GM12878 (cell line): ENCODE measurements at regions of chr15 and their contacts with region 1.

Region 1: DNA sequence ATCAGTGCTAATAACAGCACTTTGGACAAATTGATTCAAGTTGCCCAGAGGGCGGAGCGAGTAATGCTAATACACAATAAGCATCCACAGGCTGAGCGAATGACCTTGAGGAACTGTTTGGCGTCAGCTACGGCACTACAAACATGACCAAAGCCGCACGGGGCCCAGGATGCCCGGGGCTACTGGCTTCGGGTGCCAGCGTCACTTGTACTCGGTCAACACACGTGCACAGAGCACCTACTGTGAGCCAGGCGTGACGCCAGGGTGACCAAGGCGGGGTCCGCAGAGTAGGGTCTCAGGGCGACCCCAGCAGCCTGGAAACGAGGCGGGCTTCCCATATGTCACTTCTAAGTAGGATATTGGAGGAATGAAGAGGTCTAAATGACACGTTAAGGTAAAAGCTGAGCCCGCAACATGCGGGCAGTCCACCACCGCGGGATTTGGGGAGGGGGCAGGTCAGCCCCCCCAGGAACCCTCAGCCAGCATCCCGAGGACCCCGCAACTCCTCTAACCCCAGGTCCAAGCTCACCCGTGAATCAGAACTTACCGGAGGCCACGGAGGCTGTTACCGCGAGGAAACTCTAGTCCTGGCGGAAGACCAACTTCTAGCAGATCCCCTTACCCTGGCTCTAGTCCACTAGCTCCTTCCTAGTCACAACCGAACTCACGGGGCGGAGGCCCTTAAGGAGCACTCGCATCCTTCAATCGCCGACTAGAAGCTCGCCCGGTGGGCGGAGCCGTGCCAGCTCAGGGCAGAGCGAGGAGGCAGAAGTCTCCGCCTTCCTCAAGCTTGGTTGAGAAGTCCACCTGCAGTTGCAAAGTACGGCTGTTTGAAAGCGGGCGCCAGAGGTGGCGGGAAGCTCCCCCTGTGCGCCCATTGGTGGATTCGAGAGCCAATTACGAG is at the start of gene CEP152:
- DNase-seq: peak; percentile 98
- ATAC-seq: peak; percentile 94
- H3K4me3 ChIP-seq: peak within 1 kb of the TSS; percentile 79
- H3K27ac ChIP-seq: peak within 1 kb of the TSS; percentile 73
- H3K4me1 ChIP-seq: 0 out of 2 replicates have a peak, but pooled peaks cover 2% of the 10 kb centered on the region
- H3K27me3 ChIP-seq: no peaks in the 10 kb centered on the region; a peak in 1 of 4 replicates
- CTCF ChIP-seq: no peak
- EP300 ChIP-seq: no peak
- POLR2A ChIP-seq: peak; percentile 87
- RAD21 ChIP-seq: no peak
- polyA plus RNA-seq, gene CEP152: 5.3 to 5.7 TPM

Region 2: GRCh38 chr15:48149858-48150257 is 660.8 kb before region 1 on chr15:
- CTCF ChIA-PET with region 1: no interaction called
- POLR2A ChIA-PET with region 1: no interaction called
- RAD21 ChIA-PET with region 1: no interaction called
- SMC1A ChIA-PET with region 1: no interaction called
- in situ Hi-C with region 1: loop called (anchors 25 kb)
- intact Hi-C with region 1: no loop called
- DNase-seq: no peak
- ATAC-seq: no peak
- H3K4me3 ChIP-seq: no peak overlapping the region
- H3K27ac ChIP-seq: no peak overlapping the region
- H3K4me1 ChIP-seq: no peaks in the 10 kb centered on the region
- H3K27me3 ChIP-seq: no peaks in the 10 kb centered on the region
- CTCF ChIP-seq: no peak
- EP300 ChIP-seq: no peak
- POLR2A ChIP-seq: no peak
- RAD21 ChIP-seq: no peak

Region 3: GRCh38 chr15:48682949-48683651 is 127.6 kb before region 1 on chr15:
- CTCF ChIA-PET with region 1: no interaction called
- POLR2A ChIA-PET with region 1: no interaction called
- RAD21 ChIA-PET with region 1: no interaction called
- SMC1A ChIA-PET with region 1: no interaction called
- in situ Hi-C with region 1: no loop called
- intact Hi-C with region 1: no loop called
- DNase-seq: no peak
- ATAC-seq: no peak
- H3K4me3 ChIP-seq: no peak overlapping the region
- H3K27ac ChIP-seq: no peak overlapping the region
- H3K4me1 ChIP-seq: no peaks in the 10 kb centered on the region
- H3K27me3 ChIP-seq: no peaks in the 10 kb centered on the region
- CTCF ChIP-seq: no peak
- EP300 ChIP-seq: no peak
- POLR2A ChIP-seq: no peak
- RAD21 ChIP-seq: no peak